Mammary epithelial cell (primary cell): ENCODE measurements at regions of chr6 and their contacts with region 1.

Region 1: GRCh38 chr6:13068586-13069210 is 259.6 kb downstream of the TBC1D7 start:
- DNase-seq: no peak
- H3K4me3 ChIP-seq: no peak overlapping the region
- H3K27ac ChIP-seq: no peak overlapping the region
- H3K4me1 ChIP-seq: no peaks in the 10 kb centered on the region
- H3K27me3 ChIP-seq: no peaks in the 10 kb centered on the region
- CTCF ChIP-seq: no peak

Region 2: GRCh38 chr6:12962987-12963386 is 105.7 kb before region 1 on chr6:
- CTCF ChIA-PET with region 1: no interaction called
- dilution Hi-C with region 1: loop called (anchors 5 kb)
- in situ Hi-C with region 1: no loop called
- intact Hi-C with region 1: no loop called
- DNase-seq: no peak
- H3K4me3 ChIP-seq: no peak overlapping the region
- H3K27ac ChIP-seq: no peak overlapping the region
- H3K4me1 ChIP-seq: no peaks in the 10 kb centered on the region
- H3K27me3 ChIP-seq: no peaks in the 10 kb centered on the region
- CTCF ChIP-seq: no peak

Region 3: DNA sequence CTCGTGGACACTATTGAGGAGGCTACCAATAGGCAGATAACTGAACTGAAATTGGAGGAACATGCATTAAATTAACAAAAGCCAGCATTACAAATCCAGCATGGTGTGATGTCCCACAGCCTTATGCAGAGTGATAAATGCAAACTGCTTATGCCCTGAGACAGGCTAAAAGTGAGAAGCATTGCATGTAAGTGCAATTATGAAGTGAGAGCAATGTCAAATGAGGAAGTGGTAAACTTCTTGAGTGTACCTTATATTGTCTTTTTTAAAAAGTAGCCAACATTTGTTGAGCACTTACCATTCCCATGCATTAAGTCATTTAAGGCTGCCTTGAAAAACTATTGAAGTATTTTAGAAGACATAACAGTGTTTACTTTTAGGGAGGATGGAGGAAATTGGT is 47.5 kb after region 1 on chr6:
- CTCF ChIA-PET with region 1: no interaction called
- dilution Hi-C with region 1: loop called (anchors 5 kb)
- in situ Hi-C with region 1: no loop called
- intact Hi-C with region 1: no loop called
- DNase-seq: no peak
- H3K4me3 ChIP-seq: no peak overlapping the region
- H3K27ac ChIP-seq: no peak overlapping the region
- H3K4me1 ChIP-seq: no peaks in the 10 kb centered on the region
- H3K27me3 ChIP-seq: peaks cover 3% of the 10 kb centered on the region
- CTCF ChIP-seq: no peak

Region 4: GRCh38 chr6:13239530-13240455 is 171.1 kb after region 1 on chr6:
- CTCF ChIA-PET with region 1: no interaction called
- dilution Hi-C with region 1: no loop called
- in situ Hi-C with region 1: no loop called
- intact Hi-C with region 1: no loop called
- DNase-seq: no peak
- H3K4me3 ChIP-seq: no peak overlapping the region
- H3K27ac ChIP-seq: no peak overlapping the region
- H3K4me1 ChIP-seq: no peaks in the 10 kb centered on the region
- H3K27me3 ChIP-seq: no peaks in the 10 kb centered on the region
- CTCF ChIP-seq: no peak

Region 5: GRCh38 chr6:13273931-13274706 is 205.4 kb after region 1 on chr6:
- CTCF ChIA-PET with region 1: no interaction called
- dilution Hi-C with region 1: no loop called
- in situ Hi-C with region 1: no loop called
- intact Hi-C with region 1: no loop called
- DNase-seq: no peak
- H3K4me3 ChIP-seq: no peak overlapping the region
- H3K27ac ChIP-seq: no peak overlapping the region
- H3K4me1 ChIP-seq: no peaks in the 10 kb centered on the region
- H3K27me3 ChIP-seq: no peaks in the 10 kb centered on the region
- CTCF ChIP-seq: no peak